CD14-positive monocyte (primary cell): ENCODE measurements at regions of chr3 and their contacts with region 1.

Region 1: DNA sequence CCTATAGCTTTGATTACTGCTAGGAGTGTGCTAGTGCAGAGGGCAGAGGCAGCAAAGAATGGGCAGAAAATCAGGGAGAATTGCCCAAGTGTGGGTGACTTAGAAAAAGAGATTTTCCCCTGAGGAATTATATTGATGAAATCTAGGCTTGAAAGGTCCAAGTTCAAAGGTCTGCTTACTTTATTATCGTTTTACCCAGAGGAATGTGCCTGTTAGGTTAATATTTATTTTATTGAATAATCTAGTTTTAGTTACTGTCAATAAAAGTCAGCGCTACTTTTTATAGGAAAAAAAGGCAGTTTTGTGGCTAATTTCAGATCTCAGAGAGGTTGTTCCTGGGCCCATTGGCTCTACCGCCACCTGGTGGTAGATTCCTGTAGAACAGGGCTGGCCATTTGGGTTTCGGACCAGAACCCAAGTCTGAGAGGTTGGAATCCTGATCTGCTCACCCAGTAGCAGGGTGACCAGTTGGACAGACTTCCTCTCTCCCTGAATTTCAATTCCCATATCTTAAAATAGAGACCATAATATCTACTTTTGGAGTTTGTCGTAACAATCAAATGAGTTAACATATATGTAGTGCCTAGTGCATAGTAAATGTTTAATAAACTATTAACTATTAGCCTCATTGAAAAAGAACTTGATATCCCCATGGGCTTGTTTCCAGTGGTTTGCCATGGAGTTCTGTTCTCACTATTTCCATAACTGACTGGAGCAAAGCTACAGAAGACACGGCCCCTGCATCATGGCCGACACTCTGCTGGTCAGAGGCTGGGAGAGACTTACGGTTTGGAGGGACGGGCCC is 62.7 kb upstream of the ZNF148 start:
- DNase-seq: peak; percentile 35 to 56 (median 45)
- H3K4me3 ChIP-seq: no peak overlapping the region
- H3K4me3 Mint-ChIP-seq: no peak overlapping the region
- H3K27ac ChIP-seq: no peak overlapping the region
- H3K27ac Mint-ChIP-seq: no peak overlapping the region
- H3K4me1 ChIP-seq: no peaks in the 10 kb centered on the region
- H3K4me1 Mint-ChIP-seq: peaks cover 6% of the 10 kb centered on the region
- H3K27me3 ChIP-seq: no peaks in the 10 kb centered on the region
- H3K27me3 Mint-ChIP-seq: peaks cover 1 to 2% (median 2%) of the 10 kb centered on the region in 3 donors
- CTCF ChIP-seq: peak; percentile 93

Region 2: GRCh38 chr3:124928333-124929202 is 509.3 kb before region 1 on chr3:
- intact Hi-C with region 1: loop called (anchors 5 to 10 kb)
- DNase-seq: peak; percentile 27 to 47 (median 45)
- H3K4me3 ChIP-seq: no peak overlapping the region
- H3K4me3 Mint-ChIP-seq: peak overlapping the region in 1 of 2 donors; percentile 31
- H3K27ac ChIP-seq: no peak overlapping the region
- H3K27ac Mint-ChIP-seq: peak overlapping the region in 1 of 7 donors; percentile 43
- H3K4me1 ChIP-seq: peaks cover 15 to 18% of the 10 kb centered on the region in 2 donors
- H3K4me1 Mint-ChIP-seq: peaks cover 17% of the 10 kb centered on the region
- H3K27me3 ChIP-seq: no peaks in the 10 kb centered on the region
- H3K27me3 Mint-ChIP-seq: peaks cover 2 to 6% (median 3%) of the 10 kb centered on the region in 3 donors
- CTCF ChIP-seq: peak; percentile 75

Region 3: DNA sequence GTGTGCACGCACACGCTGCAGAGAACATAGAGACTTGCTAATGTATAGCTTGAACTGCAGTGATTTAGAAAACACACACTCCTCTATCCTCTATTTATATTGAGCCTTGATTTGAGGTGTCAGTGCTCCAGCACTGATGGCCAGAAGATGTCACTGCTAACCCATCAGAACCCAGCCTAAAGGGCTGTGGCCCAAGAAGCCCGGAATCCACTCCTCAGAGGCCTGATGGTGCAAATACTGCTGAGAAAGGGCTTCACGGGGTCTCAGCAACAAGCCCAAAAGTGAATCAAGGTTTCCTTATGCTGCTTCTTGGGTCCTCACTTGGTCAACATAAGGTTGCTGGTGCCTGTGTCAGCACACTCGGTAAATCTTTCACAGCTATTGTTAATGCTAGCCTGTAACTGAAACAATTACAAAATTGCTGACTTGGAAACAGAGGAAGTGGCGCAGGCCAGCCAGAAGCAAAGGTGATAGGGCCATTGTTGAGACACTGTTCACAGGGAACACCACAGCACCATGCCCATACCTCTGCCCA is 442.3 kb before region 1 on chr3:
- intact Hi-C with region 1: loop called (anchors 2 to 5 kb)
- DNase-seq: peak; percentile 64 to 74 (median 69)
- H3K4me3 ChIP-seq: peak overlapping the region; percentile 36 to 72 (median 47)
- H3K4me3 Mint-ChIP-seq: peak overlapping the region; percentile 59 to 78
- H3K27ac ChIP-seq: peak overlapping the region in 1 of 2 donors; percentile 81
- H3K27ac Mint-ChIP-seq: peak overlapping the region; percentile 43 to 83 (median 63)
- H3K4me1 ChIP-seq: peaks cover 7 to 11% of the 10 kb centered on the region in 2 donors
- H3K4me1 Mint-ChIP-seq: peaks cover 13% of the 10 kb centered on the region
- H3K27me3 ChIP-seq: no peaks in the 10 kb centered on the region
- H3K27me3 Mint-ChIP-seq: peaks cover 0 to 6% (median 0%) of the 10 kb centered on the region in 3 donors
- CTCF ChIP-seq: peak; percentile 83

Region 4: DNA sequence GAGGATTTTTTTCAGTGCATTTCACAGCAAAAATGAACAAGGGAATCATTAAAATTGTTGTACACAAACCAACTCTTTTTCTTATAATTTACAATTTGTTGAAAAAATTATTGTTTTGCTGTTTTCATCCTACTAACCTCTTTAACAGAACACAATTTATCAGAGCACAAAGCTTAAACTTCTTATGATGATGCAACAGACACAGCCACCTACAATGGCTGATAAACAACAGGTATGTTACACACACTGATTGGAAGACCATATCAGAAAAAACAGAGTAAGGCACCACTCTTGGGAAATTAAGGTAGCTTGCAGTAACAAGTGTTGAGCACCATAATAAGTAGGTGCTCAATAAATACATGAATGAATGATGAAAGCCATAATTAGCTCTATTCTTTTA is 91.1 kb after region 1 on chr3:
- intact Hi-C with region 1: no loop called
- DNase-seq: no peak
- H3K4me3 ChIP-seq: no peak overlapping the region
- H3K4me3 Mint-ChIP-seq: no peak overlapping the region
- H3K27ac ChIP-seq: no peak overlapping the region
- H3K27ac Mint-ChIP-seq: no peak overlapping the region
- H3K4me1 ChIP-seq: no peaks in the 10 kb centered on the region
- H3K4me1 Mint-ChIP-seq: no peaks in the 10 kb centered on the region
- H3K27me3 ChIP-seq: no peaks in the 10 kb centered on the region
- H3K27me3 Mint-ChIP-seq: peaks cover 0 to 2% (median 0%) of the 10 kb centered on the region in 3 donors
- CTCF ChIP-seq: no peak